HEK293 (cell line): ENCODE measurements at regions of chr15 and their contacts with region 1.

Region 1: GRCh38 chr15:82030176-82030687 is 15.6 kb downstream of the MEX3B start:
- H3K4me3 ChIP-seq: no peak overlapping the region
- H3K27ac ChIP-seq: no peak overlapping the region
- H3K4me1 ChIP-seq: no peaks in the 10 kb centered on the region
- CTCF ChIP-seq: no peak

Region 2: GRCh38 chr15:82064824-82065223 is 34.6 kb after region 1 on chr15:
- CTCF ChIA-PET with region 1: no interaction called
- POLR2A ChIA-PET with region 1: interaction called, 10 read pairs
- H3K4me3 ChIP-seq: no peak overlapping the region
- H3K27ac ChIP-seq: no peak overlapping the region
- H3K4me1 ChIP-seq: peaks cover 7% of the 10 kb centered on the region; the same call in 1 of the 2 replicates
- CTCF ChIP-seq: no peak

Region 3: GRCh38 chr15:82122746-82123400 is 92.6 kb after region 1 on chr15:
- CTCF ChIA-PET with region 1: no interaction called
- POLR2A ChIA-PET with region 1: no interaction called
- H3K4me3 ChIP-seq: no peak overlapping the region
- H3K27ac ChIP-seq: no peak overlapping the region
- H3K4me1 ChIP-seq: peaks cover 9% of the 10 kb centered on the region
- CTCF ChIP-seq: no peak